Activated CD4-positive, alpha-beta memory T cell treated with anti-CD3 and anti-CD28 coated beads, Interleukin-2, amount 10 ng/mL, durations not matched to agents 7 days and 5 days (primary cell): ENCODE measurements at regions of chr10 and their contacts with region 1.

Region 1: GRCh38 chr10:101214446-101215396 is 14.5 kb downstream of the LBX1 start:
- DNase-seq: peak; percentile 74
- H3K4me3 Mint-ChIP-seq: no peak overlapping the region
- H3K27ac Mint-ChIP-seq: peak overlapping the region; percentile 46
- H3K4me1 Mint-ChIP-seq: peaks cover 31% of the 10 kb centered on the region
- H3K27me3 Mint-ChIP-seq: peaks cover 73% of the 10 kb centered on the region

Region 2: DNA sequence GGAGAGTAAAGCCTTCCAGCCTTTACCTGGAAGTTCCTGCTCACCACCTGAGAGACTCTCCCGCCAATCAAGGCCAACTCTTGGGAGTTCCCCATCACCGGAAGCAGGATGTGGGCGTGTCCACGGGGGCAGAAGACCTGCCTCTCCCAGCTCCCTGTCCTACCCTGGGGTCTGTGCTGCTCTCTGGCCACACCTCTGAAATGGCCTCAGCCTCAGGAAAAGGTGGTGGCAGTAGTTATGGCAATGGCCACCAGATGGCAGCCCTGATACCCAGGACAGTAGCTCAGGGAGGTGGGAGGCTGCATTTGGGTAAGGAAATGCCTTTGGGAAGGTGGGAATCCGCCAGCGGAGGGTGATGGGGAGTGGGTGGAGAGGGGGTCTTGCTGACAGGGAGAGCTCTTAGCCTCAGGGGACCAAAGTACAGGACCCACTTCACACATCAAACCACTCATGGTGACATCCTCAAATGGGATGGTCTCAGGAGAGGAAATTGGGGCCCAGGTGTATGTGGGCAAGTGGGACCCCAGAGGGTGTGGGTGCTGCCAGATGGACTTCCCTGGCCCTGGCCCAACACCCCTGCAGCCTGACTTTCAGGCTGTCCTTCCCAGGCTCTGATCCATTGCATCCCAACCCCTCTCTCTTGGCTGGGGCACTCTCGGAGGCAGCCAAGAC is 119.0 kb before region 1 on chr10:
- CTCF ChIA-PET with region 1: no interaction called
- POLR2A ChIA-PET with region 1: no interaction called
- DNase-seq: peak; percentile 78
- H3K4me3 Mint-ChIP-seq: no peak overlapping the region
- H3K27ac Mint-ChIP-seq: no peak overlapping the region
- H3K4me1 Mint-ChIP-seq: no peaks in the 10 kb centered on the region
- H3K27me3 Mint-ChIP-seq: peaks cover 21% of the 10 kb centered on the region

Region 3: DNA sequence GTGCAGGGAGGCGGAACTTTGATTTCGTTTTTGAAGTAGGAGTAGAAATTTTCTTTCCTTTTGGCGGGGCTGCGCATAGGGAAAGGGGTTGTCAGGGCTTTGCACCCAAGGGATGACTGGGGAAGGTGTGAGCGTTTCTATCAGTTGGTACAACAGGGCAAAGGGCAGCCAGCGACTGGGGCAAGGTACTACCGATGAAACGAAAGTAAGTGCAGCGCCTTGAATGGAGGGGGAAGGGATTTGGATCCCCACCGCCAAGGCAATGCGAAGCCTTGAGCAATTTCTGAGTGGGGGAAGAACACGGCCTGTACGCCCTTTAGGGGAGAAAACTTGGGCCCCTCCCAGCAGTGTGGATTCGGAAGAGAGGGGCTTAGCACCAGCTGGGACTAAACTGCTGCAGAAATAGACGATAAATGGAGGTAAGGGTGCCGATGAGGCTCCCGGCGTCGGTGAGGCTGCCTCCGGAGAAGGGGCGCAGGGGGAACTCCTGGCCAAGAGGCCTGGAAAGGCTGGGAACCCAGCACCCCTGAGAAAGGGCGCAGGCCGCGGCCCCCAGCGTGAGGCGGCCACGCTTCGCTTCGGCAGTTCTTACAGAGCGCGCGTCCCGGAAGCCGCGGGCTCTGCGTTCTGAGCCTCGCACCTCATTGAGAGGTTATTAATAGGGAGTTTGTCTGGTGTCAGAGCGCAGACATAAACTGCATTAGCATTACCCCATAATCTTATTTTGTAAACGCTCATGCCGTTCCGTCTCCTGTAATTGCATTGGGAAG is 93.7 kb before region 1 on chr10:
- CTCF ChIA-PET with region 1: interaction called, 10 read pairs
- POLR2A ChIA-PET with region 1: no interaction called
- DNase-seq: peak; percentile 53
- H3K4me3 Mint-ChIP-seq: peak overlapping the region; percentile 78
- H3K27ac Mint-ChIP-seq: no peak overlapping the region
- H3K4me1 Mint-ChIP-seq: peaks cover 25% of the 10 kb centered on the region
- H3K27me3 Mint-ChIP-seq: peaks cover 60% of the 10 kb centered on the region

Region 4: DNA sequence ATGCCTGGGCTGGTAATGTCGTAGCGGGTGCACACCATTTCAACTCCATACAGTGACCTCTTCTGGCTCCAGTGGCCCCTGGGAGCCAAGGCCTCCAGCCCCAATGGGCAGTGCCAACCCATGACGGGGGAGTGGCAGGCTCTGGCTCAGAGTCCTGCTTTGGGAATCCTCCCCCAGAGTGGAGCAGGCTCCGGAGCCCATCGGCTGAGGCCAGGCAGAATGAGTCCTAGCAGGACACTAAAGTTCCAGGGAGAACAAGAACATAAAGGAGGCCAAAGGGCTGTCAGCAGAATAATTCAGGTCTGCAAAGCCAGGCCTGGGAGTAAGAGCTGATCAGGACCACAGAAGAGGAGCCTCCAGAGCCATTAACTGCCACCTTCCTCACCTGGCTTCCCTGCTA is 18.8 kb before region 1 on chr10:
- CTCF ChIA-PET with region 1: no interaction called
- POLR2A ChIA-PET with region 1: no interaction called
- DNase-seq: no peak
- H3K4me3 Mint-ChIP-seq: no peak overlapping the region
- H3K27ac Mint-ChIP-seq: no peak overlapping the region
- H3K4me1 Mint-ChIP-seq: no peaks in the 10 kb centered on the region
- H3K27me3 Mint-ChIP-seq: peaks cover 19% of the 10 kb centered on the region

Region 5: GRCh38 chr10:101228153-101228973 is 13.6 kb after region 1 on chr10:
- CTCF ChIA-PET with region 1: interaction called, 17 read pairs
- POLR2A ChIA-PET with region 1: interaction called, 4 read pairs
- DNase-seq: no peak
- H3K4me3 Mint-ChIP-seq: peak overlapping the region; percentile 6
- H3K27ac Mint-ChIP-seq: peak overlapping the region; percentile 53
- H3K4me1 Mint-ChIP-seq: peaks cover 34% of the 10 kb centered on the region
- H3K27me3 Mint-ChIP-seq: peaks cover 72% of the 10 kb centered on the region

Region 6: GRCh38 chr10:101291331-101292193 is 76.8 kb after region 1 on chr10:
- CTCF ChIA-PET with region 1: interaction called, 34 read pairs
- POLR2A ChIA-PET with region 1: no interaction called
- DNase-seq: peak; percentile 33
- H3K4me3 Mint-ChIP-seq: peak overlapping the region; percentile 24
- H3K27ac Mint-ChIP-seq: no peak overlapping the region
- H3K4me1 Mint-ChIP-seq: peaks cover 6% of the 10 kb centered on the region
- H3K27me3 Mint-ChIP-seq: peaks cover 72% of the 10 kb centered on the region

Region 7: GRCh38 chr10:101467286-101467770 is 252.6 kb after region 1 on chr10:
- CTCF ChIA-PET with region 1: interaction called, 43 read pairs
- POLR2A ChIA-PET with region 1: no interaction called
- DNase-seq: peak; percentile 26
- H3K4me3 Mint-ChIP-seq: no peak overlapping the region
- H3K27ac Mint-ChIP-seq: no peak overlapping the region
- H3K4me1 Mint-ChIP-seq: peaks cover 4% of the 10 kb centered on the region
- H3K27me3 Mint-ChIP-seq: no peaks in the 10 kb centered on the region

Region 8: GRCh38 chr10:101782811-101783735 is 568.4 kb after region 1 on chr10 and contains the start of gene NPM3:
- CTCF ChIA-PET with region 1: interaction called, 29 read pairs
- POLR2A ChIA-PET with region 1: no interaction called
- DNase-seq: peak; percentile 85
- H3K4me3 Mint-ChIP-seq: peak within 1 kb of the TSS; percentile 100
- H3K27ac Mint-ChIP-seq: peak within 1 kb of the TSS; percentile 80
- H3K4me1 Mint-ChIP-seq: peaks cover 66% of the 10 kb centered on the region
- H3K27me3 Mint-ChIP-seq: peaks cover 7% of the 10 kb centered on the region
- total RNA-seq, gene NPM3: 26.6 to 26.7 TPM